Activated CD8-positive, alpha-beta T cell treated with anti-CD3 and anti-CD28 coated beads, Interleukin-2, amount 10 ng/mL, durations not matched to agents 7 days and 5 days (primary cell): ENCODE measurements at regions of chr10 and their contacts with region 1.

Region 1: GRCh38 chr10:70221030-70221429 is 12.2 kb downstream of the PPA1 start:
- DNase-seq: no peak
- ATAC-seq: no peak
- H3K4me3 Mint-ChIP-seq: no peak overlapping the region
- H3K27ac Mint-ChIP-seq: no peak overlapping the region
- H3K4me1 Mint-ChIP-seq: peaks cover 21% of the 10 kb centered on the region
- H3K27me3 Mint-ChIP-seq: no peaks in the 10 kb centered on the region

Region 2: DNA sequence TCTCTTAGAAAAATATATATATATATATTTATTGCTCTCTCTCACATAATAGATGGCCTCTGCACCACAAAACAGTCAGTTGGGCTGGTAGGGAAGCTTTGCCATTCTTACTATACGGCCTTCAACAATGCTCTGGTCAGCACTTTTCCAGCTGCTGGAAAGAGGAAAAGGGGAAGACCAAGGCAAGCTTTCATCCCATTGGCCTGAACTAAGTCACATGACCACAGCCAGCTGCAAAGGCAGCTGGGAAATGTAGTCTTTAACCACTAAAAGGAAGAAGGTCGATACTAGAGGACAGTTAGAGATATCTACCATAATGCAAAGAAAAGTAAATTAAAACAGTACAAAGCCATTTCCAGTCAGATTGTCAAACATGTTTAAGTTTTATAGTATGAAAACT is 226.8 kb before region 1 on chr10:
- CTCF ChIA-PET with region 1: no interaction called
- POLR2A ChIA-PET with region 1: no interaction called
- DNase-seq: no peak
- ATAC-seq: no peak
- H3K4me3 Mint-ChIP-seq: no peak overlapping the region
- H3K27ac Mint-ChIP-seq: no peak overlapping the region
- H3K4me1 Mint-ChIP-seq: no peaks in the 10 kb centered on the region
- H3K27me3 Mint-ChIP-seq: peaks cover 20% of the 10 kb centered on the region

Region 3: DNA sequence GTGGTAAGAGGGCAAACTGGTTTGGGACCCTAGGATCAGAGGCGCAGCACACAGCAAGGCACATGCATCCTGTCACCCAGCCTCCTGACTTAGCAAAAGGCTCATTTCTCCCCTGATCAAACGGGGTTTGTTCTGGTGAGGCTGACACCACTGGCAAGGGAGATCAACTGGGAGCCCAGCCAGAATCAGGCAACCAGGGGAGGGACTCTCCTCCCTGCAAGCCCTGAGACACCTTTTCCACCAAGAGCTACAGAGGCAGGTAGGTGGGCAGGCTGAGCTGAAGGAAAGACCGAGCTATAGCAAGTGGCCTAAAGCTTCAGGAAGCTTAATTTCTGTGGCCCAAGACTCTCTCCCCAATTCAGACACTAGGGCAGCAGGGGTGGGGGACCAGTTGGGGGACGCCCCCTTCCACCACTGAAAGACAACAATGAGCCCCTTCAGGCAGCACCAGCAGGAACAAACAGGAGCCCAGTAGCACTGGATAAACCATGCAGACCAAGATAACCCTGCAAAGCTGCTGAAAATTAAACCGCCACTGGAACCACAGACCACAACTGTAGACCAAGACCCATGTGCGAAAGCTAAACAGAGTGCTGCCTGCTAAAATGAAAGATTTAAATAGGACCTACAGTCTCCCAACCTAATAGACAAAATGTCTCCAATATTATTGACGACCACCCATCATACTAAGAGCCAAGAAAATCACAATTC is 23.6 kb before region 1 on chr10:
- CTCF ChIA-PET with region 1: interaction called, 15 read pairs
- POLR2A ChIA-PET with region 1: no interaction called
- DNase-seq: peak; percentile 71
- ATAC-seq: peak; percentile 79
- H3K4me3 Mint-ChIP-seq: peak overlapping the region; percentile 25
- H3K27ac Mint-ChIP-seq: peak overlapping the region; percentile 79
- H3K4me1 Mint-ChIP-seq: peaks cover 47% of the 10 kb centered on the region
- H3K27me3 Mint-ChIP-seq: no peaks in the 10 kb centered on the region

Region 4: GRCh38 chr10:70233109-70233938 is 12.3 kb after region 1 on chr10 and contains the start of gene PPA1:
- CTCF ChIA-PET with region 1: interaction called, 65 read pairs
- POLR2A ChIA-PET with region 1: interaction called, 7 read pairs
- DNase-seq: peak; percentile 99
- ATAC-seq: peak; percentile 93
- H3K4me3 Mint-ChIP-seq: peak within 1 kb of the TSS; percentile 78
- H3K27ac Mint-ChIP-seq: peak within 1 kb of the TSS; percentile 79
- H3K4me1 Mint-ChIP-seq: peaks cover 45% of the 10 kb centered on the region
- H3K27me3 Mint-ChIP-seq: peaks cover 2% of the 10 kb centered on the region
- total RNA-seq, gene PPA1: 175 TPM

Region 5: DNA sequence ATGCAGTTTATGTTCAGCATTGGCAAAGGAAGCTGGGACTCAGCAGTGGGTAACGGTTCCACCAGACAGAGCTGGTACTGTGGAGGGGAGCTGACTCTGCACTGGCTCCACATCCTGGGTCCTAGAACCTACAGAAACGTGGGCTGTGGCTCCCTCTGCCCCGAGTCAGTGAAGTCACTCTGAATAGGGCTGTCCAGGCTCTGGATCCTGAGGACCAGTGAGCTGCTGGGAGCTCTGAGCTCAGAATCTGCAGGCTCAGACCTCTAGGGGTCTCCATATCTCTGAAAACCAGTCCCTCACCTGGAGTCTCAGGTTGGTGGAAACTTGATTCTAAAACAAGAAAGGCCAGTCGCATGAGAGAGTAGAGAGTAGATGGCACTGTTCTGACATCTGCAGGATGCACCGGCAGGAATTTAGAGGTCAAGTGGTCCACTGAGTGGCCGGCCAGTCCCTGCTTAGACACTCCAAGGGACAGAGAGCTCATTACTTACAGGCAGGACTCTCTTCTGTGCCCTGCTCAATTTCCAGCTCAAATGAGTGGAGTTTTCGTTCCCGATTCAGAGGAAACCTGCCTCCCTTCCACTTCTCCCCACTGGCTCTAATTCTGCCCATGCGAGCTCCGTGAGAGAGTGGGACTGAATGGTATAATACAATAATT is 44.1 kb after region 1 on chr10:
- CTCF ChIA-PET with region 1: interaction called, 12 read pairs
- POLR2A ChIA-PET with region 1: no interaction called
- DNase-seq: no peak
- ATAC-seq: peak; percentile 58
- H3K4me3 Mint-ChIP-seq: no peak overlapping the region
- H3K27ac Mint-ChIP-seq: no peak overlapping the region
- H3K4me1 Mint-ChIP-seq: peaks cover 12% of the 10 kb centered on the region
- H3K27me3 Mint-ChIP-seq: peaks cover 5% of the 10 kb centered on the region

Region 6: DNA sequence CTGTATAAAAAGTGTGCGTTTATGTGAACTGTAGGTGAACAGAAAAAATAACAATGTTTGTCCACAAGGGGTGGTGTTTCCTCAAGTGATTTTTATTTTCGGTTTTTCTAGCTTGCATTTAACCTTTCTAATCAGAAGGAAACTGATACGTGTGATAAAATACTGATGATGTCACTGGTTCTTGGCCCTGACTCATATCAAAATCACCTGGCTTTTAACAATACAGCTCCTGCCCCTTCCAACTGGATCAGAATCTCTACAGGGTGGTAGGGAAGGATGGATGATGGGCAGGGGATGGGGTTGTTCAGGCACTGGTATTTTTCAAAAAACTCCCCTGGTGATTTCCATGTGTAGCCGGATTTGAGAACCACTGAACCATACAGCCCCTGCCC is 51.9 kb after region 1 on chr10:
- CTCF ChIA-PET with region 1: interaction called, 17 read pairs
- POLR2A ChIA-PET with region 1: no interaction called
- DNase-seq: no peak
- ATAC-seq: peak; percentile 81
- H3K4me3 Mint-ChIP-seq: no peak overlapping the region
- H3K27ac Mint-ChIP-seq: peak overlapping the region; percentile 23
- H3K4me1 Mint-ChIP-seq: peaks cover 16% of the 10 kb centered on the region
- H3K27me3 Mint-ChIP-seq: no peaks in the 10 kb centered on the region

Region 7: DNA sequence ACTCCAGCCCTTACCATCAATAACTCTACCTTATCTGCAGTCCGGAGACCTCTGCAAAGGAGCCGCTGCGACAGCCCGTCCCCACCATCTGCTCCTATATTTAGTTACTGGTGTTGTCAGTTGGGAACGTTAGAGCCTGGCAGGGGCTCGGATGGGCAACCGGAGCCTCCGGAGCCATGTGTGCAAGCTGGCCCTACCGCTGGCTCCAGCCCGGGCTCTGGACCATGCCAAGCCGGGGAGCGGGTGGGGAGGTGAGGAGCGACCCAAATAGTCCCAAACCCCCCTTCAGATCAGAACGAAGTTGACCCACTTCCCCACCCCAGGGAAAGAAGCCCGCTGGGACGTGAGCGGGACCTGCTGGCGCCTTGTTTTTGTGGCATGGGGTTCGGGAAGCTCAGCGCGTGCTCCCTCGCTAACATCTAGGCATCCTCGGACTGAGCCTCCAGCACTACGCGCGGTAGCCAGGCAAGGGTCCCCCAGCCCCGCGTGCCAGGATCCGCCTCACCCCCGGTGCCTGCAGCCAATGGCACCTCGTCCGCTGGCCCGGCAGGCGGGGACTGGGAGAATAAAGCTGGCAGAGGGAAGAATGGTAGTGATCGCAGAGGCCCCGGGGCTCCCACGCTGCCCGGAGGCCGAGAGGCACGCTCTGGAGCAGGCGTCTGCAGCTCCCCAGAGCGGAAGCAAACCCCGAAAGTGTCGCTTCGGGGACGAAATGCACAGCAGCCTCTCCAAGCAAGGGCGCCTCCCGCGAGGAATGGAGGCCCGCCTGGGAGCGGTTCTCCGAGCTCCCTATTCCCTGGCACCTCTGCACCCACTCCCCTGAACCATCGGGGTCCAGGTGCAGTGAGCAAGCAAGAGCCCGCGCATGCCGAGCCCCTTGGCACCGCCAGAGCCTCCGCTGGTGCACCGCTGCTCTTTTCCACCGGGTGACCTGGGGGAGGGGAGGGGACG is 160.7 kb after region 1 on chr10:
- CTCF ChIA-PET with region 1: interaction called, 31 read pairs
- POLR2A ChIA-PET with region 1: interaction called, 3 read pairs
- DNase-seq: peak; percentile 60
- ATAC-seq: peak; percentile 47
- H3K4me3 Mint-ChIP-seq: peak overlapping the region; percentile 83
- H3K27ac Mint-ChIP-seq: peak overlapping the region; percentile 60
- H3K4me1 Mint-ChIP-seq: peaks cover 23% of the 10 kb centered on the region
- H3K27me3 Mint-ChIP-seq: peaks cover 14% of the 10 kb centered on the region

Region 8: GRCh38 chr10:70404036-70404786 is 183.2 kb after region 1 on chr10 and contains the start of gene EIF4EBP2:
- CTCF ChIA-PET with region 1: interaction called, 10 read pairs
- POLR2A ChIA-PET with region 1: no interaction called
- DNase-seq: peak; percentile 98
- ATAC-seq: peak; percentile 90
- H3K4me3 Mint-ChIP-seq: peak within 1 kb of the TSS; percentile 86
- H3K27ac Mint-ChIP-seq: peak within 1 kb of the TSS; percentile 90
- H3K4me1 Mint-ChIP-seq: peaks cover 35% of the 10 kb centered on the region
- H3K27me3 Mint-ChIP-seq: no peaks in the 10 kb centered on the region
- total RNA-seq, gene EIF4EBP2: 58.7 to 60.8 TPM